B cell (primary cell): ENCODE measurements at regions of chr1 and their contacts with region 1.

Region 1: DNA sequence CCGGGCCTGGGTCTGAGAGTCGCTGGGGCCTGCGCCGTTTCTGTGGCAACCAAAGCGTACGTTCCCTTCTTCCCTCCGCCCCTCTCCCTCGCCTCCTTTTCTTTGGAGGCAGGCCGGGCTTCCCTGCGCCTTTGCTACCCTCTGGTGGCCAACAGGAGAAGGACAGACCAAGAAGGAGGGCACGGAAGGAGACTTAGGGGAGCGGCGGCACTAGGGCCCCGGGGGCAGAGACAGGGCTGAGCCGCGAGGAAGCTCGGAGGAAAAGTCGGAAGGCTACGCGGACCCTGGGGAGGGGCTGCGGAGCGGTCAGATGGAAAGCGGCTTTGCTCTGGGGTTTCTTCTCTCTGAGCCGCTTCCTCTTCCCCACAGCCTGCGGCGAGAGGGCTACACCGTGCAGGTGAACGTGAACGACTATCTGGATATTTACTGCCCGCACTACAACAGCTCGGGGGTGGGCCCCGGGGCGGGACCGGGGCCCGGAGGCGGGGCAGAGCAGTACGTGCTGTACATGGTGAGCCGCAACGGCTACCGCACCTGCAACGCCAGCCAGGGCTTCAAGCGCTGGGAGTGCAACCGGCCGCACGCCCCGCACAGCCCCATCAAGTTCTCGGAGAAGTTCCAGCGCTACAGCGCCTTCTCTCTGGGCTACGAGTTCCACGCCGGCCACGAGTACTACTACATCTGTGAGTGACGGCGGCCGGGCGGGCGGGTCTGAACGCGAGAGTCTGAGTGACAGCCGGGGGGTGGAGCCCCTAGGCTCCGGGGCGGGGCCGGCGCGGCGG is 6.3 kb downstream of the EFNA3 start:
- DNase-seq: peak; percentile 97
- ATAC-seq: peak; percentile 73
- H3K4me3 ChIP-seq: peak overlapping the region; percentile 48 to 80 (median 76)
- H3K4me3 Mint-ChIP-seq: peak overlapping the region; percentile 91
- H3K27ac ChIP-seq: peak overlapping the region; percentile 77 to 79
- H3K27ac Mint-ChIP-seq: peak overlapping the region; percentile 93
- H3K4me1 ChIP-seq: peaks cover 59 to 62% of the 10 kb centered on the region in 2 donors
- H3K4me1 Mint-ChIP-seq: peaks cover 48% of the 10 kb centered on the region
- H3K27me3 ChIP-seq: peaks cover 0 to 46% (median 38%) of the 10 kb centered on the region in 4 experiments
- H3K27me3 Mint-ChIP-seq: peaks cover 30% of the 10 kb centered on the region
- CTCF ChIP-seq: peak; percentile 87

Region 2: GRCh38 chr1:154955718-154956543 is 129.0 kb before region 1 on chr1 and contains the start of gene PBXIP1:
- CTCF ChIA-PET with region 1: interaction called, 12 read pairs
- POLR2A ChIA-PET with region 1: interaction called, 6 read pairs
- intact Hi-C with region 1: no loop called
- DNase-seq: peak; percentile 94
- ATAC-seq: peak; percentile 68
- H3K4me3 ChIP-seq: peak within 1 kb of the TSS; percentile 71 to 97 (median 83)
- H3K4me3 Mint-ChIP-seq: peak within 1 kb of the TSS; percentile 92
- H3K27ac ChIP-seq: peak within 1 kb of the TSS; percentile 99
- H3K27ac Mint-ChIP-seq: peak within 1 kb of the TSS; percentile 96
- H3K4me1 ChIP-seq: peaks cover 59 to 68% of the 10 kb centered on the region in 2 donors
- H3K4me1 Mint-ChIP-seq: peaks cover 72% of the 10 kb centered on the region
- H3K27me3 ChIP-seq: no peaks in the 10 kb centered on the region
- H3K27me3 Mint-ChIP-seq: no peaks in the 10 kb centered on the region
- CTCF ChIP-seq: peak; percentile 39
- total RNA-seq, gene PBXIP1: 212 and 219 TPM in 2 replicates

Region 3: GRCh38 chr1:155017041-155017945 is 67.6 kb before region 1 on chr1:
- CTCF ChIA-PET with region 1: interaction called, 26 read pairs
- POLR2A ChIA-PET with region 1: no interaction called
- intact Hi-C with region 1: loop called (anchors 1 kb)
- DNase-seq: peak; percentile 93
- ATAC-seq: peak; percentile 75
- H3K4me3 ChIP-seq: peak overlapping the region; percentile 9 to 68 (median 49)
- H3K4me3 Mint-ChIP-seq: peak overlapping the region; percentile 84
- H3K27ac ChIP-seq: peak overlapping the region; percentile 88 to 89
- H3K27ac Mint-ChIP-seq: peak overlapping the region; percentile 93
- H3K4me1 ChIP-seq: peaks cover 53 to 67% of the 10 kb centered on the region in 2 donors
- H3K4me1 Mint-ChIP-seq: peaks cover 69% of the 10 kb centered on the region
- H3K27me3 ChIP-seq: no peaks in the 10 kb centered on the region
- H3K27me3 Mint-ChIP-seq: no peaks in the 10 kb centered on the region
- CTCF ChIP-seq: peak; percentile 99

Region 4: GRCh38 chr1:155050560-155051341 is 34.2 kb before region 1 on chr1 and contains the start of gene ADAM15:
- CTCF ChIA-PET with region 1: interaction called, 77 read pairs
- POLR2A ChIA-PET with region 1: interaction called, 6 read pairs
- intact Hi-C with region 1: loop called (anchors 1 kb)
- DNase-seq: peak; percentile 83
- ATAC-seq: peak; percentile 84
- H3K4me3 ChIP-seq: peak within 1 kb of the TSS; percentile 44 to 82 (median 76)
- H3K4me3 Mint-ChIP-seq: peak within 1 kb of the TSS; percentile 92
- H3K27ac ChIP-seq: peak within 1 kb of the TSS in 1 of 2 donors; percentile 18
- H3K27ac Mint-ChIP-seq: peak within 1 kb of the TSS; percentile 77
- H3K4me1 ChIP-seq: peaks cover 20 to 30% of the 10 kb centered on the region in 2 donors
- H3K4me1 Mint-ChIP-seq: peaks cover 25% of the 10 kb centered on the region
- H3K27me3 ChIP-seq: no peaks in the 10 kb centered on the region
- H3K27me3 Mint-ChIP-seq: no peaks in the 10 kb centered on the region
- CTCF ChIP-seq: peak; percentile 95
- total RNA-seq, gene ADAM15: 14.6 and 17.0 TPM in 2 replicates

Region 5: GRCh38 chr1:155135415-155136028 is 50.6 kb after region 1 on chr1 and contains the start of gene SLC50A1:
- CTCF ChIA-PET with region 1: interaction called, 21 read pairs
- POLR2A ChIA-PET with region 1: interaction called, 9 read pairs
- intact Hi-C with region 1: loop called (anchors 1 kb)
- DNase-seq: peak; percentile 96
- ATAC-seq: peak; percentile 86
- H3K4me3 ChIP-seq: peak within 1 kb of the TSS; percentile 86 to 99 (median 92)
- H3K4me3 Mint-ChIP-seq: peak within 1 kb of the TSS; percentile 100
- H3K27ac ChIP-seq: peak within 1 kb of the TSS; percentile 99 to 100
- H3K27ac Mint-ChIP-seq: peak within 1 kb of the TSS; percentile 98
- H3K4me1 ChIP-seq: peaks cover 22 to 26% of the 10 kb centered on the region in 2 donors
- H3K4me1 Mint-ChIP-seq: peaks cover 46% of the 10 kb centered on the region
- H3K27me3 ChIP-seq: no peaks in the 10 kb centered on the region
- H3K27me3 Mint-ChIP-seq: peaks cover 3% of the 10 kb centered on the region
- CTCF ChIP-seq: no peak
- total RNA-seq, gene SLC50A1: 61.3 and 62.8 TPM in 2 replicates

Region 6: DNA sequence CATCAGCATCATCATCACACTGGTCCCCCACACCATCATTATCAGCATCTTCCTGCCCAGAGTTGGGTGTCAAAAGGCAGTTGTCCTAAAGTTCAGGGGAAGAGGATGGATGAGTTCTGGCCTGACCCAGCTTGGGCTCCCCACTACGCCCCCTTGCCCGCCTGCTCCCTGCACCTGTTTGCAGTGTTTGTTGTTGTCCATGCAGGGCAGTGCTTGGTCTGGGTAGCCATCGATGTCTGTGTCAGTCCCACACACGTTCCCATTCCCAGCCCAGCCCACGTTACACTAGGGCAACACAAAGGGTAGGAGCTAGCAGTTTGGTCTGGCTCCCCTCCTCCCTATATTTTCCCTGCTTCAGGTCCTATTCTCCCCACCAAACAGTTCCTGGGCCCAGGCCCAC is 116.0 kb after region 1 on chr1:
- CTCF ChIA-PET with region 1: no interaction called
- POLR2A ChIA-PET with region 1: no interaction called
- intact Hi-C with region 1: no loop called
- DNase-seq: no peak
- ATAC-seq: no peak
- H3K4me3 ChIP-seq: no peak overlapping the region
- H3K4me3 Mint-ChIP-seq: no peak overlapping the region
- H3K27ac ChIP-seq: no peak overlapping the region
- H3K27ac Mint-ChIP-seq: no peak overlapping the region
- H3K4me1 ChIP-seq: no peaks in the 10 kb centered on the region
- H3K4me1 Mint-ChIP-seq: no peaks in the 10 kb centered on the region
- H3K27me3 ChIP-seq: no peaks in the 10 kb centered on the region
- H3K27me3 Mint-ChIP-seq: no peaks in the 10 kb centered on the region
- CTCF ChIP-seq: no peak

Region 7: DNA sequence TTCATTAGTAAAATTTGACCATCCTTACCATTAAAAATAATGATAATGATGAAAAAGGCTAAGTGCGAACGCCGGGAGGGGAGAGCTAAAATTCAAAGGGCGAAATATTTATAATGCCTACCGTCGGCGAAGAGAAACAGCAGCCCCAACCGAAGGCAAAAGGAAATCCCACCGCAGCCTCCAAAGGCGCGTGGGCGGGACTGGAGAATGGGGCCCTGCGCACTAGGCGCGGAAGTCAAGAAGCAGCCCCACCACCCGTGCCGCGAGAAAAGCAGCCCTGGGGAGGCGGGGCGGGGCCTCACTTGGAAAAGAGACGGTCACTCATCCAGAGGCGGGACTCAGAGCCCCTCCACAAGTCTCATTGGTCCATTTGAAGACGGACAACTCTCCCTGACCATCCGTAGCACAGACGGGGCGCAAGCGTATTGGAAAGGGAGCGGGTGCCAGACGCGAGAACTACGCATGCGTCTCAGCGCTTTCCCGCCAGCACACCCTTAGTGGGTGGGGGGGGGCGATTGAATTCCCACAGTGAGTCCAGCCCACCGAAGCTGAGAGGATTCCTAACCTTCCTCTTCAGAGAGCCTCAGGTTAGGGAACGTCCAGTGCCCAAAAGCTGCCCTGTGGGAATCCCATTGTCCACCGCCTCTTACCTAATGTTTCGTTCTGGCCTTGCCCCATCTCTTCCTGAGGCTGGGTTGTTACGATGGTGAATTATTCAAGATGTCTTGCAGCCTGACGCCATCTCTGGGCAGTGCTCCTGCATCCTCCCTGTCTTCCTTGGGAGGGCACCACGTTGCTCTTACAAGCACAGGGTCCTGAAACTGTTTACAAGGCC is 142.6 kb after region 1 on chr1:
- CTCF ChIA-PET with region 1: interaction called, 4 read pairs
- POLR2A ChIA-PET with region 1: no interaction called
- intact Hi-C with region 1: loop called (anchors 2 kb)
- DNase-seq: peak; percentile 98
- ATAC-seq: peak; percentile 97
- H3K4me3 ChIP-seq: peak overlapping the region; percentile 61 to 93 (median 68)
- H3K4me3 Mint-ChIP-seq: peak overlapping the region; percentile 85
- H3K27ac ChIP-seq: peak overlapping the region; percentile 70
- H3K27ac Mint-ChIP-seq: peak overlapping the region; percentile 91
- H3K4me1 ChIP-seq: peaks cover 43 to 56% of the 10 kb centered on the region in 2 donors
- H3K4me1 Mint-ChIP-seq: peaks cover 43% of the 10 kb centered on the region
- H3K27me3 ChIP-seq: no peaks in the 10 kb centered on the region
- H3K27me3 Mint-ChIP-seq: no peaks in the 10 kb centered on the region
- CTCF ChIP-seq: no peak